IMR-90 (cell line): ENCODE measurements at regions of chr4 and their contacts with region 1.

Region 1: GRCh38 chr4:150078637-150079581 is 664 bp downstream of the DCLK2 start:
- DNase-seq: peak; percentile 46
- ATAC-seq: peak; percentile 75
- H3K4me3 ChIP-seq: peak overlapping the region; percentile 78
- H3K27ac ChIP-seq: peak overlapping the region; percentile 69
- H3K4me1 ChIP-seq: no peaks in the 10 kb centered on the region
- H3K27me3 ChIP-seq: no peaks in the 10 kb centered on the region
- CTCF ChIP-seq: 0 out of 2 replicates have a peak, but pooled peaks have one; percentile 14
- POLR2A ChIP-seq: no peak
- RAD21 ChIP-seq: peak; percentile 9; the same call in 1 of the 2 replicates

Region 2: DNA sequence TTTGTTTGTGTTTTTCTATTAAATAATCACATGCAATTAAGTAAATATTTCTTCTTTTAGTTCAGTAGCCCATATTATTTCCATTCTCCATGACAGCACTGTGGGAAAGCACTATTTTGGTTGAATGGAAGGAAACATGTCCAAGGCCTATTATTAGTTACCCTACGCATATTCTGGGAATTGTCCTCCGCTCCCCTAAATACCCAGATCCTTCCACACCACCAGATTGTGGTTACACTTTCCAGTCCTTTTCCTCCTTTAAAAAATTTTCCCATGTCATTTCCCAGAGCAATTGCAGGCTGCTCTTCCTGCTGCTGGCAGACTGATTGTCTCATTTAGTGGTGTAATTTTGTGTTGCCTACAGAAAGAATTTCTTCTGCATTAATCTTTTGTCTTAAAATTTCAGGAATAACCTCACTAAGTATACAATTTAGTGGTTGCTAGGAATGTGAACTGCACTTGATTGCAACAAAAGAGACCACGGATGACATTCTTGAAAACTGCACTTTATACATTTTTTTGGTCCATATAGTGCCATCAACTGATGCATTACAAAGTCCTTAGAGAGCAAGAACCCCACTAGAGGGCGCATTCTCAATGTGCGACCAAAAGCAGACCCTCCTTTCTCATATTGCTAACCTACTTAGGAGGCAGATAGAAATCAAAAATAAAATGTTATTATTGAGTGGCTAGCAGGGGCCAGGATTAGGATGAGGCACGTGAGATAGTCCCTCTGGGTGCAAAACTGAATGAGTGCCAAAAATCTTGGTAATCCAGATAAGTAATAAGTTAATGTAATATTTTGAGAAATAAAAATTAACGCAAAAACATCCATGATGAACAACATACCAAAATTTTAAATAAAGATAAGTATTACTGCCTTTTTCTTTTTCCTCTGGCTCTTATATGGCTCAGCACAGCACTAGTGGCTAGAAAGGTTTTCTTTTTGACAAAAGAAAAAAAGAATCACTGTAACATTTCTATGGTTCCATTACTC is 164.5 kb before region 1 on chr4:
- CTCF ChIA-PET with region 1: no interaction called
- POLR2A ChIA-PET with region 1: no interaction called
- dilution Hi-C with region 1: no loop called
- in situ Hi-C with region 1: no loop called
- intact Hi-C with region 1: loop called (anchors 1 kb)
- DNase-seq: peak; percentile 68
- ATAC-seq: peak; percentile 79
- H3K4me3 ChIP-seq: no peak overlapping the region
- H3K27ac ChIP-seq: no peak overlapping the region
- H3K4me1 ChIP-seq: no peaks in the 10 kb centered on the region
- H3K27me3 ChIP-seq: no peaks in the 10 kb centered on the region
- CTCF ChIP-seq: peak; percentile 67
- POLR2A ChIP-seq: no peak
- RAD21 ChIP-seq: peak; percentile 55